Mucosa of descending colon (tissue), 3 donors: ENCODE measurements at regions of chr2 and their contacts with region 1.

Region 1: GRCh38 chr2:112054847-112055729 is at the start of gene TMEM87B:
- DNase-seq: peak; percentile 98 to 100 (median 99)
- ATAC-seq: peak; percentile 79
- H3K4me3 ChIP-seq: peak within 1 kb of the TSS; percentile 85
- H3K4me1 ChIP-seq: peaks cover 35% of the 10 kb centered on the region
- CTCF ChIP-seq: no peak
- total RNA-seq, gene TMEM87B: 39.2 to 72.2 (median 55.7) TPM

Region 2: DNA sequence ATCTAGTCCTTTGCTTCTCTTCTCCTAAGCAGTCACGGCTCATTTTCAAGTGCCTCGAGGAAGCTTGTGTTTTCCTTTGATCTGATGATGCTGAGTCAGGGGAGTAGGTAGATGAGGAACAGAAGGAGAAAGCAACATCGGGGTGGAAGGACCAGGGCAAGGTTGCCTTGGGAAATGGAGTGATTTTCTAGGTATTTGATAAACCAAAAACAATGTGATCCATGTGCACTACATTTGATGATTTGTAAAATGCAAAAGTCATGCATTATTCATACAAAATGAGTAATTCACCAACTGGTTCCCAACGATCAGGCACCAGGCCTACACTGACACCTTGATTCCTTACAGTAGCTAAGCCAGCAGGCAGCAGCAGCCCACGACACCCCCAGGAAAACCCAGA is 376.4 kb before region 1 on chr2:
- intact Hi-C with region 1: no loop called
- DNase-seq: no peak
- ATAC-seq: no peak
- H3K4me3 ChIP-seq: no peak overlapping the region
- H3K4me1 ChIP-seq: no peaks in the 10 kb centered on the region
- CTCF ChIP-seq: no peak

Region 3: GRCh38 chr2:112010751-112011150 is 44.3 kb before region 1 on chr2:
- intact Hi-C with region 1: no loop called
- DNase-seq: peak; percentile 53 to 66 (median 58)
- ATAC-seq: peak; percentile 96
- H3K4me3 ChIP-seq: no peak overlapping the region
- H3K4me1 ChIP-seq: peaks cover 9% of the 10 kb centered on the region
- CTCF ChIP-seq: no peak

Region 4: DNA sequence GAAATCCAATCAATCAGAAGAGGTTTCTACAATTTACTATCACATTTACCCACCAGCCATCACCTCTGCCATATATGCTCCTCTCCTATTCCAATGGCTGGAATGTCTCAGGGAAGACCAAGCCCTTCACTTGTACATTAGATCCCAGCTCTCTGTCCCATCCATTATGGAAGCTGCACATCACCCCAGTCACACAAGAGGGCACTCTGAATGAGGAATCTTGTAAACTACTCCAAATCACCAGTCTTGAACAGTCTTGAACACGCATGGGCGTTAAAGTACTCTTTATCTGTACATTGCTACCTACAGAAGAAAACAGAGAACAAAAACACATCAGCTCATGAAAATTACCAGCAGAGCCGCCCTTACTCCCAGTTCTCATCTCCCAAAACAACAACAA is 161.1 kb after region 1 on chr2:
- intact Hi-C with region 1: no loop called
- DNase-seq: no peak
- ATAC-seq: no peak
- H3K4me3 ChIP-seq: no peak overlapping the region
- H3K4me1 ChIP-seq: no peaks in the 10 kb centered on the region
- CTCF ChIP-seq: no peak

Region 5: DNA sequence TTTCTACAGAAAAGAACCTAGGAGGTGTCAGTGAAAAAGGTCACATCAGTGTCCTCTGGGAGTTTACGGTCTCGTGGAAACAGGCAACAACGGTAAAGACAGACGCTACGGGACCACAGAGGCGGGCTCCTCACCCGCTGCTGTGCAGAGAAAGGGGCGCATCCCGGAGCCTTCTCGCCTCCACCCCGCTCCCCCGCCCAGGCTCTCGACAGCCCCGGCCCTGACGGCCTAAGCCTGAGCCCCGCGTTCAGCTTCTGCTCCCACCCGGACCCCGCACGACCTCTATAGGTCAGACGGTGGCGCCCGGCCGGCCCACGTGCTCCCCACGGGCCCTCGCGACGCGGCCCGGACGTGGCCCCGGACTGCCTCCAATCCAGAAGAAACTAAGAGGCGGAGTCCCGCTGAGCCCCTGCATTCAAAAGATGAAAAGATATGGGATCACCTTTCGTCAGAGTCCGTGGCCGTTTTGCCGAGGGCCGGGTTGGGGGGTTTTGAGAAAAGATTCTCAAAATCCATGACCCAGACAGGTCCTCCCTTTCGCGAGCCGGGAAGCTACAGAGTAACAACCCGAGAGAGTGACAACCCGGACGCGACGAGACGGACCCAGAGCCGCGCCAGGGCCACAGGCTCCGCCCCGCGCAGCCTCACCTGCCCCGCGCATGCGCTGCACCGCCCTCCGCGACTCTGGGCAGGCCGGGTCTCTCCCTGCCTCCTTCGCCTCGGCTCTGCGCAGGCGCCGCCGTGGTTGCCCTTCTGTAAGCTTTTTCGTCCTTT is 199.6 kb after region 1 on chr2 and contains the start of gene ZC3H8:
- intact Hi-C with region 1: loop called in 1 of 2 experiments (anchors 10 kb)
- DNase-seq: peak; percentile 95 to 98 (median 96)
- ATAC-seq: peak; percentile 99
- H3K4me3 ChIP-seq: peak within 1 kb of the TSS; percentile 44
- H3K4me1 ChIP-seq: peaks cover 6% of the 10 kb centered on the region
- CTCF ChIP-seq: no peak
- total RNA-seq, gene ZC3H8: 8.7 to 13.6 (median 9.6) TPM

Region 6: GRCh38 chr2:112839407-112840067 is 784.4 kb after region 1 on chr2:
- intact Hi-C with region 1: no loop called
- DNase-seq: no peak
- ATAC-seq: no peak
- H3K4me3 ChIP-seq: no peak overlapping the region
- H3K4me1 ChIP-seq: peaks cover 5% of the 10 kb centered on the region
- CTCF ChIP-seq: no peak